ENCODE measurements at regions of chr12 and their contacts with region 1.

Region 1: DNA sequence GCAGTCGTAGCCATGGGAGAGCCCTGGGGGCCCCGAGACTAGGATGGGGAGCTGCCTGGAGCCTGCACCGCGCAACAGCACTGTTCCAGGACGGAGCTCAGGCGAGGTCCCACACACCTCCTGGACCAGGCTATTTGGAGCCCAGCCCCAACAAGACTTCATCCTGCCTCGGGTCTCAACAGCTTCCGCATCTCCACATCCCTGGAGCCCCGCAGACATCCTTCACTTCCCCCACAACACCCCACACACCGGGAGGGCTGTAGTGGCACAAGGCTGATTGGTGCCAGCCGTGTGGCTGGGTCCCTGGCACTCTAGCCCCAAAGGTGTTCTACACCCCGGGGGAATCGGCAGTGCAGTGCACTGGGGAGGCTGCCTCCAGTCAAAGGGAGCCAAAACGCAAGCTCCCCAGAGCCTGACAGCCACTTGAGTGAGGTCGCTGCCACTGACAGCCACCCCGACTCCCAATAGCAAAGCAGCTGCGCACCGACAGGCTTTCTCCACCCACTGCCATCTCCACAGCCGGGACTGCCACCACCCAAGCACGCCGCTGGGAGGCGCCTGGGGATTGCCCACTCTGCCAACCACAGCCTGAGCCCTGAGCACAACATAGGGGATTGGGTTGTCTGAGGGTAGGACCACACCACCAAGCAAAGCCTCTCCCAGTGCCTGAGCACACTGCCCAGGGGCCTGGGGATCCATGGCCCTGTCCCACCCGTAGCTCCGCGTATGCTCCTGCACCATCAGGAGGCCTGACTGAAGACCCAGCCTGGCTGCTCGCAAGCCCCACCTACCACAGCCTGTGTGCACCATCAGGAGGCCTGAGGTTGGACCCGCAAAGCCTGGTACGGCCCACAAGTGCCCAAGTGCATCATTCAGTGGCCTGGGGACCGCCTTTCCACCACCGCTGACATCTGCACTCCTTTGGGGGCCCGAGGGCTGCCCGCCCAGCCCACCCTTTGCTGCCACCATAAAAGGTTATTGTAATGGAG is 13.2 kb upstream of the KLRF1 start:
- DNase-seq: peak; percentile 89
- CTCF ChIP-seq: peak; percentile 98

Region 2: DNA sequence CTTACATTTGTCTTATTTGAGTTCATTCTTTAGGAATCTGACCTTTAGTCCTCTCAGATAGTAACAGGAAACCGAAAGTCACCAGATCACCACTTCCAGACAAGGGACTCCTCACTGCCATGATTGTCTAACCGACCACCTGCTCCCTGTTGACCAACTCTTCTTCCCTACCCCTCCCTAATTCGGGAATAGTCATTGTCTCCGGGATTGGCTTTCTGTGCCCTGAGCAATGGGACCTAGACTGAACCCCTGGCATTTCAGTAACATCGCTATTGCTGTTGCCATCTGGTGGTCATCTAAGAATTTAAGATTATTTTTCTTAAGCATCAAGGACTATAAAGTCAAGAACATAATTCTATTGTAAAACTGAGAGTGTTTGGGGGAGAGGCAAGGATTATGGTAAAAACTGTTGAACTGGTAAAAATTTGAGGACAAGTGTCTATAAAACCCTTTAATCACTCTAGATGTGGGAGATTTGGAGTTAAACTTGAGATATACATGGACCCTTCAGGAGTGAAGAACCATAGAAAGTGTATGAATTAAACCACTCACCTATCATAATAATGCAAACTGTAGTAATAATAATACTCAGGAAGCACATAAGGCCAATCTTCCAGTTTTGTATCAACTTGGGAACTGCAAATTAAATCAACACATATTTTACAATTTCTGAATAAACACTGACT is 111.7 kb after region 1 on chr12:
- in situ Hi-C with region 1: loop called (anchors 10 kb)
- DNase-seq: no peak
- CTCF ChIP-seq: peak; percentile 36

Region 3: GRCh38 chr12:10363914-10364814 is 550.0 kb after region 1 on chr12:
- in situ Hi-C with region 1: no loop called
- DNase-seq: peak; percentile 55
- CTCF ChIP-seq: no peak

Region 4: DNA sequence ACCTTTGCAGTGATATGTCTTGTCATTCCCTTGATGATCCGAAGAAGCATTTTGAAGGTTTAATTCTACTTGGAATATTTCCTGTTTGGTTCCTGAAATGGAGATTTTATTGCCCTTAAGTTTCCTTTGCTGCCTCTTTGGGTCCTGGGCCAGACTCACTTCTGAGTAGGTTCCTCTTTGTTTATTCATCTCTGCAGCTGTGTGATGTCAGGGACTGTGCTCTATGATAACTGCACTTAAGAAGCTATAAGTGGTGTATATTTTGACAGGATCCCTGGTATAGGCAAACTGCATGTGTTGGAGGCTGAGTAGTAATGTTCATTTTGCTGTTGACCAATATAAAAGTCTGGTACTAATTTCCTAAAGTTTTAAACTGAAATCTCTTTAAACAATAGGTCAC is 595.3 kb after region 1 on chr12 and contains the start of gene KLRC4:
- in situ Hi-C with region 1: no loop called
- DNase-seq: no peak
- CTCF ChIP-seq: no peak

Measured in GM13977 (cell line).